Gastrocnemius medialis (tissue), 4 donors: ENCODE measurements at regions of chr17 and their contacts with region 1.

Region 1: DNA sequence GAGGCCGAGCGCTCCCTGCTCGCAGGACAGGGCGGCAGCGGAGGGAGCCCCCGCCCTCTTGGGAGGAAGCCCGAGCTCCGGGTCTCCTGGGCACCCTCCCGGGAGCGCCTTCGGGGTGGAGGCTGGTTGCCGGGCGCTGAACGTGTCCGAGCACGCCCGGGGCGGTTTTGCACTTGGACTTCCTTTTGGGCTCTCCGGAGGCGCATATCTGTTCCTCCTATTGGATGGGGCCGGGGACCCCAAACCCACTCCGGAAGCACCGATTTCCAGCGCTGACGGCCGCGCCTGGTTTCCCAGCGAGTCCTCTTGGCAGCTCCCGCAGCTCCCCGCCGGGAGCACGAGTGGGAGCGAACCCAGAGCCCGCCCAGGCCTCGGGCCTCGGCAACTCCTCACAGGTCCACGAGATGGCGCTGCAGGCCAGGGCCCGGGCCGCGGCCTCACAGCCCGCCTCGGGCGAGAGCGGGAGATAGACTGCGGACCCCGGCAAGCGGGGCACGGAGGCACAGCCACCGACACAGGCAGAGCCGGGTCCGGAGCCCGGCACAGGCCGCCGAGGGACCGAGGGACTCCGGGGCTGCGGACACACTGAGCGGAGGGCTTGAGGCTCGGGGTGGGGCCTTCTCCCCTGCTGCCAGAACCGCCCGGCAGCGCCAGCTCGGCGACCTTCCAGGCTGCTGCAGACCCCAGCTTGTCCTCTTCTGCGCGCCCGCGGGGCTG is 12.7 kb downstream of the TBX2 start:
- DNase-seq: peak in 1 of 2 donors; percentile 69
- ATAC-seq: peak; percentile 73 to 78
- H3K4me3 ChIP-seq: peak overlapping the region; percentile 67 to 74 (median 70)
- H3K27ac ChIP-seq: peak overlapping the region; percentile 54 to 76 (median 67)
- H3K4me1 ChIP-seq: peaks cover 0 to 25% of the 10 kb centered on the region in 2 donors
- H3K27me3 ChIP-seq: peaks cover 13 to 28% (median 21%) of the 10 kb centered on the region in 3 donors
- CTCF ChIP-seq: peak; percentile 93 to 99 (median 98)
- POLR2A ChIP-seq: no peak

Region 2: DNA sequence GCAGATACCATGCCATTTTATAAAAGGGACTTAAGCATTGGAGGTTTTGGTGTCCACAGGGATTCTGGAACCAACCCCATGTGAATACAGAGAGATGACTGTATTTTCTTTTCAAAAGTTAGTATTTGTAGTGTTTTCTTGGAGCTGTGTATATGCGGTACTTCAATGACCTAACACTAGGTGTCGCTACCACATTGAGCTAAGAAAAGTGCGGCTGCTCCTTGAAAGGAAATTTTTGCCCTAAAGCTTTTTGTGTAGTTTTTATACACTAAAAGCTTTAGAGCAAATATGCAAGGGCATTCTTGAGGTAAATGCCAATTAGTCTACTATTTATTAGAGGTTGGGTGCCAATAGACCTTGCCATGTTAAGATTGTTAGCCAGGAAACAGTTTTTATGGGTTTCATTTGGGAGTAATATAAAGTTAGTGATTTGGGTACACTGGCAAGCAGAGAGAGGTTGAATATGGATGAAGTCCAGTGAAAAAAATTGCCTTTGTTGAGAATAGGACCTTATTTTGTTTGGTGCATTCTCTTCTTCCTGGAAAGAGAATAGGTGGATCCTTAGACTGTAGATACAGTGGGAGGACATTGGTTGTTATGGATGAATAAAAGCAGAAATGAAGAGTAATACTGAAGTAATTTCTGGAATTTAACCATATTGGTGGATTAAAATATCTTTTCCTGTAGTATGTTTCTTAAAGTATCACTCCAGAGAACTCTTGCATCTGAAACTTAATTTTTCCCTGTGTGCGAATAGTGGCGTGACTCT is 691.4 kb before region 1 on chr17:
- in situ Hi-C with region 1: no loop called
- intact Hi-C with region 1: loop called (anchors 2 kb)
- DNase-seq: no peak
- ATAC-seq: peak in 1 of 2 donors; percentile 53
- H3K4me3 ChIP-seq: no peak overlapping the region
- H3K27ac ChIP-seq: no peak overlapping the region
- H3K4me1 ChIP-seq: peaks cover 0 to 3% of the 10 kb centered on the region in 2 donors
- H3K27me3 ChIP-seq: no peaks in the 10 kb centered on the region
- CTCF ChIP-seq: peak; percentile 56 to 88 (median 70)
- POLR2A ChIP-seq: no peak

Region 3: DNA sequence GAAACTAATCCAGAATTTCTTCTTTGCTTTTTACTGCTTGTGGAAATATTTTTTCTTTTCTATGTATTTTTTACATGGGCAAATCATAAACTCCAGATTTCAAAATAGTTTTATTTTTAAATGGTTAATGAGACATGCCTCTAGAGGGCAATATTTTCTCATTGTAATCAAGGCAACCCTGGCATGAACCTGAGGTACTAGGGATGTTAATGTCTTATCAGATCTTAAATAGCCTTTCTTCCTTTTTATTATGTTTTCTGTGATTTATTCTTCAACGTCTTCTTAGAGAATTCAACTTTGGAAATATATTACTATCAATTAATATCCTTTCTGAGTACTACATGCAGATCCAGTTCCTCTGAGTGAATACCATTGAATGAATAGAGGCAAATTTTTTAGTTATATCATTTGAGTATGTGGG is 410.0 kb before region 1 on chr17:
- in situ Hi-C with region 1: no loop called
- intact Hi-C with region 1: loop called (anchors 5 kb)
- DNase-seq: no peak
- ATAC-seq: no peak
- H3K4me3 ChIP-seq: no peak overlapping the region
- H3K27ac ChIP-seq: no peak overlapping the region
- H3K4me1 ChIP-seq: no peaks in the 10 kb centered on the region
- H3K27me3 ChIP-seq: no peaks in the 10 kb centered on the region
- CTCF ChIP-seq: peak in 4 of 5 experiments; percentile 20 to 45 (median 28)
- POLR2A ChIP-seq: no peak

Region 4: GRCh38 chr17:61551255-61551742 is 139.0 kb after region 1 on chr17:
- in situ Hi-C with region 1: no loop called
- intact Hi-C with region 1: loop called (anchors 1 kb)
- DNase-seq: no peak
- ATAC-seq: no peak
- H3K4me3 ChIP-seq: no peak overlapping the region
- H3K27ac ChIP-seq: no peak overlapping the region
- H3K4me1 ChIP-seq: no peaks in the 10 kb centered on the region
- H3K27me3 ChIP-seq: peaks cover 0 to 5% (median 0%) of the 10 kb centered on the region in 3 donors
- CTCF ChIP-seq: peak in 4 of 5 experiments; percentile 11 to 44 (median 32)
- POLR2A ChIP-seq: no peak

Region 5: DNA sequence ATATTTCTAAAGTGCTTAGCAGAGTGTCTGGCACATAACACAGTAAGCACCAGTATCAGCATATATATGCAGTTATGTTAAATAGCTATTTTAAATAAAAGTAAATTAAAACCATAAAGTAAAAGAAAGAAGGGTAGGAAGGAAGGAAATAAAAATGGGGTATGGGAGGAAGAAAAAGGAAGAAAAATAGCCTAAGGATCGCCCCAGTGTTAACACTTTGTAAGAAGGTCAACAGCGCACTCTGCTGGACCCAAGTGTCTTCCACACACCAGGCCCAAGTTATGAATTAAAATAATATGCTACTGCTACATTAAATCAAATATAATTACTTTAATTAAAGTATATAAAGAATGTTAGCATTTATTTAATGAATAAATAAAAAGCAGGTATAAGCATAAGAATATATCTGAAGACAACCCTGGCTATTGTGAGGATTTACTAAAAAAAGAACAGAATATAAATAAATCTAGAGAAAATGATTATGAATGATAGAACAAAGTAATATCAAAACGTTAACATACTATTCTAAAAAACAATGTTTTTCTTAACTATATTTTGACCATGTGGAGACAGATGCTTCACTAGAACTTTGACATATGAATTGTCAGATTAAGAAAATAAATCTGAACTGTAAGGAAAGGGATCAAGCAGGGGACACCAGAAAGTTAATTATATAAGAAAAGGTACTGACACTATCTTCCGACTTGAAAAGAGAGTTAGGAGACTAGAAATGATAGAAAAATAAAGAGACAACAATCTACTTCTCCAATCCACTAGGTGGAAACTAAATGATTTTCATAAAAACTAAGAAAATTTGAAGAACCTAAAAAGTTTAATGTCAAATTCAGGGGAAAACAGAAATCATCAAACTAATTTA is 425.1 kb after region 1 on chr17:
- in situ Hi-C with region 1: no loop called
- intact Hi-C with region 1: loop called (anchors 1 kb)
- DNase-seq: peak in 1 of 2 donors; percentile 6
- ATAC-seq: no peak
- H3K4me3 ChIP-seq: no peak overlapping the region
- H3K27ac ChIP-seq: no peak overlapping the region
- H3K4me1 ChIP-seq: no peaks in the 10 kb centered on the region
- H3K27me3 ChIP-seq: no peaks in the 10 kb centered on the region
- CTCF ChIP-seq: peak; percentile 22 to 58 (median 34)
- POLR2A ChIP-seq: no peak

Region 6: GRCh38 chr17:61862975-61863800 is 450.9 kb after region 1 on chr17 and contains the start of gene BRIP1:
- in situ Hi-C with region 1: no loop called
- intact Hi-C with region 1: loop called (anchors 10 kb)
- DNase-seq: peak; percentile 89 to 90
- ATAC-seq: peak; percentile 98 to 99
- H3K4me3 ChIP-seq: peak within 1 kb of the TSS; percentile 69 to 92 (median 75)
- H3K27ac ChIP-seq: peak within 1 kb of the TSS; percentile 79 to 84 (median 81)
- H3K4me1 ChIP-seq: peaks cover 9 to 13% of the 10 kb centered on the region in 2 donors
- H3K27me3 ChIP-seq: no peaks in the 10 kb centered on the region
- CTCF ChIP-seq: no peak
- POLR2A ChIP-seq: no peak
- total RNA-seq, gene BRIP1: 0.09 to 0.13 TPM in 2 of 4 donors, not detected in the others

Region 7: DNA sequence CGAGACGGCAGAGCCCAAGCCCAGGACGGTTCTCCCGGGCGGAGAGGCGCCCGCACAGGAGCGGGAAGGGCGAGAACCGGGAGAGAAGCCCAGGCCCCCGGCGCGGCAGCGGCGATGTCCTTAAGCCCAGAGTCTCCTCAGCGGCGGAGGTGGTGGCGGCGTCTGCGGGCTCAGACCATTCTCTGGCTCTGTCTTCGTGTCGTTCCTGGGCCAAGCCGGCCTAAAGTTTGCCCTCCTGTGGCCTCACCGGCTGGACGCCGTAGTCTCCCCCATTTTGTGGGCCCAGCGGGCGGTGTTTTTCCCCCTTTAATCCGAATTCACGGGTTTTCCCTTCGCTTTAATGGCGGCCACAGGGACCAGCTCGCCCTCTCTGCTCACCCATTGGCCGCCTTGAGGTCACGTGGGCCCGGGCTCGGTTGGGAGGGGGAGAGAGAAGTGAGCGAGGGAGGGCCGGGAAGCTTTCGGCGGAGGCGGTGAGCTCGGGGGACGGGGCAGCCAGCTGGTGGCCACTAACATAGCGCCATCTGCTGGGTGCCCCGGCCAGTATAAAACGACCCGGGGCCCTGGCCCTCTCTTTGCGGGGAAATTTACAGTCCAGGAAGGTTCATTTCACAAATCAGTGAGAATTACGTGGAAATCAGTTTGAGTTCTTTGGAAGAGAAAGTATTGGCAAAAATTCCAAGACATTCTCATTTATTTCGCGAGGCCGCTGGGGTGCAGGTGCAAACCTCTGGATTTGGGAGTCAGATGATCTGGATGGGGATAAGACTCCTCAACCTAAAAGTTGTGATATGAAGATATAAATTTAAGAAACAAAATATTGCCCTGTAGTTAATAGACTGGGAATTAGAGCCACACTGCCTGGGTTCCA is 653.5 kb after region 1 on chr17:
- in situ Hi-C with region 1: no loop called
- intact Hi-C with region 1: loop called (anchors 1 kb)
- DNase-seq: peak; percentile 98 to 99
- ATAC-seq: peak; percentile 82 to 86
- H3K4me3 ChIP-seq: peak overlapping the region; percentile 84 to 100 (median 91)
- H3K27ac ChIP-seq: peak overlapping the region; percentile 96 to 100 (median 100)
- H3K4me1 ChIP-seq: peaks cover 24 to 26% of the 10 kb centered on the region in 2 donors
- H3K27me3 ChIP-seq: no peaks in the 10 kb centered on the region
- CTCF ChIP-seq: peak; percentile 85 to 95 (median 92)
- POLR2A ChIP-seq: peak; percentile 89 to 94